ENCODE measurements at regions of chr3 and their contacts with region 1.

Region 1: DNA sequence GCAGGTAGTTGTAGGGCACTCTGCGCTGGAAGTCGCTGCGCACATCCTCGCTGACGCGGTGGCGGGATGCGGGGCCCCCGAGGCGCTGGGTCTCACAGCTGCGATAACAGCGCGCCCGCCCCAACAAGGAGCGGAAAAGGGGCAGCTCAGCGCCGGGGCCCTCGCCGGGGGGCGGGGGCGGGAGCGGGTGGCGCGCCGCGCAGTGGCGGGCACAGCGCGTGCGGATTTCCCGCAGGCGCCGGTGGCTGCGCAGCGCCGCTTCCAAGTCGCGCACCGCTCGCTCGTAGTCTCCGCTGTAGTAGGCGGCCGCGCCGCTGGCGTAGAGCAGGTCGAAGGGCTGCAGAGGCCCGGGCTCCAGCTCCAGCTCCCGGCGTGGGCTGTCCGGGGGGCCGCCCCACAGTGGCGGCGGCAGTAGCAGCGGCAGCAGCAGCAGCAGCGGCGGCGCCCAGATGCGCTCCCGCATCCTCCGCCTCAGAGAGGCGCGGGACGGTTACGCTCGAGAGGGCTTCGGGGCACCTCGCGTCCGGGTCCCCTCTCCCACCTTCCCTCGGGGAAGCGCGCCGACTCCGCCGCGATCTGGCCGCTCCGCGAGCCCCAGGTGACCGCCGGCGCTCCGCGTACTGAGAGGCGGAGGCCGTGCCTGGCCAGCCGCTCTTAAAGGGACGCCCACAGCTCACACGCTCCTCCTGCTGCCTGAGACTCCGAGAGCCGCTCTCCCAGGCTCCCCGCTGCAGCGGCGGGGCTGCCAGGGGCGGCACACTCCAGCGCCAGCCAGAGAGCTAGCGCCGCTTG is at the start of gene P3H2:
- DNase-seq: peak; percentile 92
- H3K4me3 ChIP-seq: peak within 1 kb of the TSS; percentile 85 to 90 (median 90)
- H3K27ac ChIP-seq: peak within 1 kb of the TSS; percentile 93
- H3K4me1 ChIP-seq: peaks cover 50% of the 10 kb centered on the region
- H3K27me3 ChIP-seq: no peaks in the 10 kb centered on the region
- CTCF ChIP-seq: peak; percentile 14 to 58
- total RNA-seq, gene P3H2: 71.2 to 181 TPM

Region 2: DNA sequence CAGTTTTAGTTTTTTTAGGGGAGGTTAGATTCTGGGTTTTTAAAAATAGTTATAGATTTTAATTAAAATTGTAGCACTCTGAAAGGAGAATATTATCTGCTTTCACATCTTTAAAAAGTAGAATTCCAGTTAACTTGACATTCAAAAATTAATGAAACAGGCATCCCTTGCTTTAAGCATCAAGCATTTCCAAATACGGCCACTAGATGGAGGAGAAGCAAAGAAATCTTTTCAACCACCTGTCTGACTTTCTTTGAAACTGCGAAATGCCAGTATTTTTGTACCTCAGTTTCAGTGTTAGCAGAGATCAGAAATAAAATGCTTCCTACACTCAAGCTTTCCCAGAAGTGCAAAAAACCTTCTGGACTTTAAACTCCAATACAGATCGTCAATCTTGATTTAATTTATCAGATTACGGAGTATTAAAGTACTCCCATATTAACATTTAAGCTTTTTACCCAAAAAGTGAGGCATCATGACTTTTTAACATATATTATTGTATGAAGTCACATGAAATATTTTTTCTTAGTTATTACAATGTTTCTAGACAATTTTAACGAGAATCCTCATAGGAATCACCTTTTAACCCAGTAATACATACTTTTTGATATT is 153.1 kb before region 1 on chr3:
- CTCF ChIA-PET with region 1: no interaction called
- dilution Hi-C with region 1: no loop called
- in situ Hi-C with region 1: no loop called
- intact Hi-C with region 1: loop called (anchors 1 kb)
- DNase-seq: peak; percentile 41
- H3K4me3 ChIP-seq: no peak overlapping the region
- H3K27ac ChIP-seq: no peak overlapping the region
- H3K4me1 ChIP-seq: peaks cover 6% of the 10 kb centered on the region
- H3K27me3 ChIP-seq: no peaks in the 10 kb centered on the region
- CTCF ChIP-seq: peak; percentile 69 to 90

Region 3: DNA sequence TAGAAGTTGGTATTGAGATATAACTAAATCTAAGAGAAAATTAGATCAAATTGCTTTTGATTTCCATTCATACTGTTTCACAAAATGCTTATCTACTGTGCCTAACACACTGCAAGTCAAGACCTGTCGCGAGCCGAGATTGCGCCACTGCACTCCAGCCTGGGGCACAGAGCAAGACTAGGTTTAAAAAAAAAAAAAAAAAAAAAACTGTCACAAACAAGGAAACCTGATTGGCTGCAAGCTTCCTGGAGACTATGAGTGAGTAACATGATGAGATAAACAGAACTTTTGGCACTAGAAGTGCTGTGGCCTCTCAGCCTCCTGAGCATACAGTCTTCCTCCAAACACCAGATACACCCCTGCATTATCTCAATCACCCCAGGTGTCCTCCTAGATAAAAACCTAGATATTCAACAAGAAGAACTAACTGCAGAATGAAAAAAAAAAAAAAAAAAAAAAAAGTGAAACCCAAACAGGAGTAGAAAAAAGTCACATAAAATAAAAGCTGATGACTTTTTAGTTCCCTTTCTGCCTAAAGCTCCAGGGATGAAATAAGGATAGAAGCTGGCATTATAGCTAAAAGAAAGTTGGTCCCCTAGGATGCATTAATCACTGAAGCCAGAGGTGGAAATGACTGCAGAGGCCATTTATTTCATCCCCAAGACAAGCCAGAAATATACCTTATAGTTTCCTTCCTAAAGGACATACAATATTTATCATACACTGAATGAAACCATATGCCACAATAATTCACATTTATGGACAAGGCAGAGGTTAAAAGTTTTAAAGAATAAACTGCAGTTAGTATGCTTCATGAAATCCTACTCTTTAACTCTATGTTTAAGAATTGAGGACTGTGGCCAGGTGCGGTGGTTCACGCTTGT is 82.2 kb before region 1 on chr3:
- CTCF ChIA-PET with region 1: no interaction called
- dilution Hi-C with region 1: no loop called
- in situ Hi-C with region 1: no loop called
- intact Hi-C with region 1: loop called (anchors 5 kb)
- DNase-seq: peak; percentile 95
- H3K4me3 ChIP-seq: peak overlapping the region in 1 of 3 experiments; percentile 17
- H3K27ac ChIP-seq: peak overlapping the region; percentile 64
- H3K4me1 ChIP-seq: peaks cover 18% of the 10 kb centered on the region
- H3K27me3 ChIP-seq: no peaks in the 10 kb centered on the region
- CTCF ChIP-seq: no peak

Region 4: GRCh38 chr3:190155752-190156151 is 35.3 kb after region 1 on chr3:
- CTCF ChIA-PET with region 1: no interaction called
- dilution Hi-C with region 1: no loop called
- in situ Hi-C with region 1: no loop called
- intact Hi-C with region 1: loop called (anchors 2 kb)
- DNase-seq: peak; percentile 99
- H3K4me3 ChIP-seq: no peak overlapping the region
- H3K27ac ChIP-seq: peak overlapping the region; percentile 96
- H3K4me1 ChIP-seq: peaks cover 22% of the 10 kb centered on the region
- H3K27me3 ChIP-seq: no peaks in the 10 kb centered on the region
- CTCF ChIP-seq: no peak

Region 5: GRCh38 chr3:190188197-190188596 is 67.7 kb after region 1 on chr3:
- CTCF ChIA-PET with region 1: no interaction called
- dilution Hi-C with region 1: no loop called
- in situ Hi-C with region 1: loop called in 1 of 2 experiments (anchors 10 kb)
- intact Hi-C with region 1: loop called (anchors 5 kb)
- DNase-seq: no peak
- H3K4me3 ChIP-seq: no peak overlapping the region
- H3K27ac ChIP-seq: no peak overlapping the region
- H3K4me1 ChIP-seq: peaks cover 15% of the 10 kb centered on the region
- H3K27me3 ChIP-seq: no peaks in the 10 kb centered on the region
- CTCF ChIP-seq: no peak

Region 6: GRCh38 chr3:190205739-190206138 is 85.3 kb after region 1 on chr3:
- CTCF ChIA-PET with region 1: no interaction called
- dilution Hi-C with region 1: no loop called
- in situ Hi-C with region 1: no loop called
- intact Hi-C with region 1: loop called (anchors 1 kb)
- DNase-seq: peak; percentile 85
- H3K4me3 ChIP-seq: no peak overlapping the region
- H3K27ac ChIP-seq: peak overlapping the region; percentile 31
- H3K4me1 ChIP-seq: peaks cover 4% of the 10 kb centered on the region
- H3K27me3 ChIP-seq: no peaks in the 10 kb centered on the region
- CTCF ChIP-seq: no peak

Region 7: DNA sequence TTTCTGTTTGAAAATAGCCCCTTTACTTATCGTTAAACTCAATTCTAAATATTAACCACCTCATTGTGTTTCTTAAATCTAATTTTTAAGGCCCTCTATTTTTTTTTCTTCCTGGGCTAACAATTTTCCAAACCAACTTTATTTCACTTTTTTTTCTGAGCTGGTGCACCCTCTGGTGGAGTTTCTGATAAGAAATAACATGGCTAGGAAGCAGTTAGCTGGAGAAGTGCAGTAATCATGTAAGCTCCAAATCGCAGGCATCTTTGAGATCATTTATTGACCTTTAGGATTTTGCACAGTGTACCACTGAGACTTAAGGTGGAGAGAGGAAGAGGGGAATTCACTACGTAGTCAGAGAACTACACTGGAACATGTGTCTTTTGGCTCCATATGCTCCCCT is 322.8 kb after region 1 on chr3:
- CTCF ChIA-PET with region 1: no interaction called
- dilution Hi-C with region 1: no loop called
- in situ Hi-C with region 1: no loop called
- intact Hi-C with region 1: loop called (anchors 5 kb)
- DNase-seq: no peak
- H3K4me3 ChIP-seq: no peak overlapping the region
- H3K27ac ChIP-seq: no peak overlapping the region
- H3K4me1 ChIP-seq: no peaks in the 10 kb centered on the region
- H3K27me3 ChIP-seq: no peaks in the 10 kb centered on the region
- CTCF ChIP-seq: peak; percentile 26 to 45

Region 8: DNA sequence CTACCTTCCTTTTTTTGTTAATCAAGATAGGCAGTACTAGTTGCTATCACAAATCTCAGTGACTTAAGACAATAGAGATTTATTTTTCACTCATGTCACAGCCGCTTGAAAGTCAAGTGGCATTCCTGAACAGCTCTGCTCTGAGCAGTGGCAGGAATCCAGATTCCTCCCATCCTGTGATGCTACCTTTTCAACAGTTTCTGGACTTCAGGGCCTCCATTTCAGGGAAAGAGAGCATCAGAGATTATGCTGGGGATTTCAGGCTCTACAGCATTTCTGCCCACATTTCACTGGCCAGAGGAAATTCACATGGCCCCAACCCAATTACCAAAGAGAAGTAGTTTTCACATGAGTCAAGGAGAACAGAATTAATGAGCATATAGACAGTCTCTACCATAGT is 476.9 kb after region 1 on chr3:
- CTCF ChIA-PET with region 1: no interaction called
- dilution Hi-C with region 1: no loop called
- in situ Hi-C with region 1: no loop called
- intact Hi-C with region 1: no loop called
- DNase-seq: no peak
- H3K4me3 ChIP-seq: no peak overlapping the region
- H3K27ac ChIP-seq: no peak overlapping the region
- H3K4me1 ChIP-seq: peaks cover 15% of the 10 kb centered on the region
- H3K27me3 ChIP-seq: no peaks in the 10 kb centered on the region
- CTCF ChIP-seq: no peak

Measured in mammary epithelial cell (primary cell).